GM13977 (cell line): ENCODE measurements at regions of chrX and their contacts with region 1.

Region 1: GRCh38 chrX:65595460-65595876 is 60.9 kb upstream of the LAS1L start:
- DNase-seq: peak; percentile 79
- CTCF ChIP-seq: peak; percentile 98

Region 2: GRCh38 chrX:65712005-65712806 is 116.7 kb after region 1 on chrX:
- in situ Hi-C with region 1: loop called (anchors 10 kb)
- DNase-seq: no peak
- CTCF ChIP-seq: no peak

Region 3: GRCh38 chrX:66408507-66408906 is 813.0 kb after region 1 on chrX:
- in situ Hi-C with region 1: loop called (anchors 25 kb)
- DNase-seq: peak; percentile 13
- CTCF ChIP-seq: peak; percentile 48

Region 4: GRCh38 chrX:66728818-66729271 is 1133.4 kb after region 1 on chrX:
- in situ Hi-C with region 1: loop called (anchors 25 kb)
- DNase-seq: peak; percentile 12
- CTCF ChIP-seq: peak; percentile 73